IMR-90 (cell line): ENCODE measurements at regions of chrX and their contacts with region 1.

Region 1: GRCh38 chrX:153667956-153668396 is 5.6 kb downstream of the PNCK start:
- DNase-seq: peak; percentile 64
- ATAC-seq: peak; percentile 93
- H3K4me3 ChIP-seq: no peak overlapping the region
- H3K27ac ChIP-seq: no peak overlapping the region
- H3K4me1 ChIP-seq: no peaks in the 10 kb centered on the region
- H3K27me3 ChIP-seq: peaks cover 20% of the 10 kb centered on the region
- CTCF ChIP-seq: peak; percentile 73
- POLR2A ChIP-seq: no peak
- RAD21 ChIP-seq: peak; percentile 77

Region 2: DNA sequence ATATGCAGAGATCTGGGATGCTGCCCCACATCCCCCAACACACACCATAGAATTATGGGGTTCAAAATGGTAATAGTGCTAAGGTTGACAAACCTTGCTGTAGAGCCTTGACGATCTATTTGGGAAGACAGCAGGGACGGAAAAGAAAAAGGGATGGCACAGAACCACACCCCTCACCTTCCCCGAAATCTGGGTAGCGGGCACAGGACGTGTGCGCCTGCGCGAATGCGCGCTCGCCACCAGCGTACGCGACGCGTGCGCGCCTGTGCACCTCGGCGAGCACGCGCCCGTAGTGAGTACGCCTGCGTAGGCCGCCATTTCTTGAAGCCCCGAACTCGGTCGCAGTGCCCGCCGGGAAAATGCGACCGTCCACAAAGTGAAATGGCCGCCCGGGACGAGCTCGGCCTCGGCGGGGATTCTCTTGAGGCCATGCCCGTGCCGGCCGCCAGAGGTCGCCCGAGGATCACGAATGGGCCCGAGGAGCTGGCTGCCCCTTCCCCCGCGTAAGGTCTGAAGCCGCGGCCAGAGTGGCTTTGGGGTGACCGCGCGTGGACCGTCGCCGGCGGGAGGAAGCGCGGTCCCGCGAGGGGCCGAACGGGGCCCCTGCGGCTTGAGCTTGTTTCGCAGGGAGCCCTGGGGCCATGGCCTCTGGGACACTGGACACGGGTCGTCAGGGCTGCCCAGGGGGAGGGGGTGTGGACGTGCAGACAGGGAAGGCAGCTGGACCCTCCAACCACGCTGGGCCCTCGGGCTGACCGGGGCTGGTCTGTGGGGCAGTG is 726.5 kb before region 1 on chrX:
- CTCF ChIA-PET with region 1: no interaction called
- POLR2A ChIA-PET with region 1: no interaction called
- dilution Hi-C with region 1: no loop called
- in situ Hi-C with region 1: no loop called
- intact Hi-C with region 1: loop called (anchors 5 kb)
- DNase-seq: peak; percentile 89
- ATAC-seq: peak; percentile 96
- H3K4me3 ChIP-seq: peak overlapping the region; percentile 78
- H3K27ac ChIP-seq: peak overlapping the region; percentile 67
- H3K4me1 ChIP-seq: peaks cover 2% of the 10 kb centered on the region; the same call in 1 of the 2 replicates
- H3K27me3 ChIP-seq: peaks cover 6% of the 10 kb centered on the region; the same call in 1 of the 2 replicates
- CTCF ChIP-seq: peak; percentile 81
- POLR2A ChIP-seq: 0 out of 2 replicates have a peak, but pooled peaks have one; percentile 26
- RAD21 ChIP-seq: peak; percentile 81

Region 3: DNA sequence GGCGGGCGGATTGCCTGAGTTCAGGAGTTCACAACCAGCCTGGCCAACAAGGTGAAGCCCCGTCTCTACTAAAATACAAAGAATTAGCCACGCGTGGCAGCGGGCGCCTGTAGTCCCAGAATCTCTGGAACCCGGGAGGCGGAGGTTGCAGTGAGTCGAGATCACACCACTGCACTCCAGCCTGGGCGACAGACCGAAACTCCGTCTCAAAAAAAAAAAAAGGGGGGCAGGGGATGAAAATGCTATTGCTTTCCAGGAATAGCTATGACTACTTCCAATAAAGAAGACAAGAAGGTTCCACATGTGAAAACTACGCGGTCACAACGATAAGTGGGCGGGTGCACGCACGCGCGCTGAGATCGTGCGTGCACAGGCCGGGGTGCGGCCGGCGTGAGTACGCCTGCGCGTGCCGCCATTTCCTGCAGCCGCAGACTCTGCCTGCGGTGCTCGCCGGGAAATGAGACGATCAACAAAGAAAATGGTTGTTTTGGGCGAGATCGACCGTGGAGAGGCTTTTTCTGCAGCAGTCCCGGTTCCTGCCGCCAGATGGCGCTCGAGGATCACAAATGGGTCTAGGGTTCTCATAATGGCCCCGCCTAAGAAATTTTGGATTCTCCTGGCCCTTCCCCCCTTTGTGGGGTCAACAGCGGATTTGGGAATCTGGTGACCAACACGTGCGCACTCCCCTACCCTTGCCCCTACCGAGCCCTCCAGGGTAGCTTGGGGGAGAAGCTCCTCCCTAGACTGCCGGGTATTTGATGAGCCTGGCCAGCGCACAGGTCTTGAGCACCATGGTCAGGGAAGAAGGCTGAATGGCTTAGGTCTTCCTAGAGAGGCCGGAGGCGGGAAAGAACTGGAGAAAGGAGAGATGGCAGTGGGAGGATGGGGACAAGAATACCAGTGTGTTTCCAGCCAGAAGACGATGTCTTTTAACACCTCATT is 709.2 kb before region 1 on chrX:
- CTCF ChIA-PET with region 1: no interaction called
- POLR2A ChIA-PET with region 1: no interaction called
- dilution Hi-C with region 1: no loop called
- in situ Hi-C with region 1: loop called (anchors 25 kb)
- intact Hi-C with region 1: loop called (anchors 1 kb)
- DNase-seq: peak; percentile 85
- ATAC-seq: peak; percentile 99
- H3K4me3 ChIP-seq: peak overlapping the region; percentile 11
- H3K27ac ChIP-seq: no peak overlapping the region
- H3K4me1 ChIP-seq: no peaks in the 10 kb centered on the region
- H3K27me3 ChIP-seq: no peaks in the 10 kb centered on the region
- CTCF ChIP-seq: peak; percentile 88
- POLR2A ChIP-seq: no peak
- RAD21 ChIP-seq: peak; percentile 88

Region 4: GRCh38 chrX:153032397-153033118 is 635.4 kb before region 1 on chrX:
- CTCF ChIA-PET with region 1: no interaction called
- POLR2A ChIA-PET with region 1: no interaction called
- dilution Hi-C with region 1: no loop called
- in situ Hi-C with region 1: no loop called
- intact Hi-C with region 1: loop called (anchors 5 kb)
- DNase-seq: peak; percentile 18
- ATAC-seq: peak; percentile 93
- H3K4me3 ChIP-seq: no peak overlapping the region
- H3K27ac ChIP-seq: no peak overlapping the region
- H3K4me1 ChIP-seq: no peaks in the 10 kb centered on the region
- H3K27me3 ChIP-seq: no peaks in the 10 kb centered on the region; the same call in 1 of the 2 replicates
- CTCF ChIP-seq: peak; percentile 80
- POLR2A ChIP-seq: no peak
- RAD21 ChIP-seq: peak; percentile 90

Region 5: DNA sequence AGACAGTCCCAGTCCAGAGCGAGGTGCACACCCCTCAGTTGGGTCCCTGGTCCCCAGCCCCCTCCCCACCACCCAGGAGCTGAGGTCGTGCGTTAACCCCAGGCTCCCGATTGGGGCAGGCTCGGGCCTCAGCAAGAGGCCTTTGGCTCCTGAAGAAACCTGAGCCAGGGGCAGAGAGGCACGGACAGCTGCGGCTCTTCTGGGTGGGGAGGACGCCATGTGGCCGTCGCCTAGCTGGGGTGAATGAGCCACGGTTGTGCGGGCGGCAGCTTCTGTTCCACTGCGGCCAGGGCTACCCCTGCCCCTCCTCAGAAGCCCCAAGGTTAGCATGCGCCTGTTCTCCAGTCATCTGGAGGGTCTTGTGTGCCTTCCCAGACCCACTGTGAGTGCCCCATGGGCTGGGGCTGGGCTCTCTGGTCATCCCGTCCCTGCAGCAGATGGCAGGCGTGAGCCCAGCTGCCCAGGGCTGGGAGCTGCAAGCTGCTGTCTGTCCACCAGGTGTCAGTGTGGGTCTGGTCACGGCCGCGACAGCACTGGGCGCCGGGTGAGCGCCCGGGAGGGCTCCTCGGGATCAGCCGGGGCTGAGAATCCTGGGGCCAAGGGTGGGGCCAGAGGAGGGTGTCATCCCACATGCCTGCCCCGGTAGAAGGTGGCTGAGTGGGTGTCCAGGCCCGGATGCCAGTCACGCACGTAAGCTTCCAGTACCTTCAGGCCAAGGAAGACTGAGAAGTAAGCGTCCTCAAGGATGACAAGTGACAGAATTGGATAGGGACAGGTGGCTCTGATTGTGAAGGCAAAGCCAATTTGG is 128.6 kb before region 1 on chrX:
- CTCF ChIA-PET with region 1: interaction called, 5 read pairs
- POLR2A ChIA-PET with region 1: no interaction called
- dilution Hi-C with region 1: no loop called
- in situ Hi-C with region 1: no loop called
- intact Hi-C with region 1: loop called (anchors 1 kb)
- DNase-seq: peak; percentile 44
- ATAC-seq: peak; percentile 98
- H3K4me3 ChIP-seq: no peak overlapping the region
- H3K27ac ChIP-seq: no peak overlapping the region
- H3K4me1 ChIP-seq: no peaks in the 10 kb centered on the region
- H3K27me3 ChIP-seq: peaks cover 7% of the 10 kb centered on the region; the same call in 1 of the 2 replicates
- CTCF ChIP-seq: peak; percentile 96
- POLR2A ChIP-seq: no peak
- RAD21 ChIP-seq: peak; percentile 75

Region 6: DNA sequence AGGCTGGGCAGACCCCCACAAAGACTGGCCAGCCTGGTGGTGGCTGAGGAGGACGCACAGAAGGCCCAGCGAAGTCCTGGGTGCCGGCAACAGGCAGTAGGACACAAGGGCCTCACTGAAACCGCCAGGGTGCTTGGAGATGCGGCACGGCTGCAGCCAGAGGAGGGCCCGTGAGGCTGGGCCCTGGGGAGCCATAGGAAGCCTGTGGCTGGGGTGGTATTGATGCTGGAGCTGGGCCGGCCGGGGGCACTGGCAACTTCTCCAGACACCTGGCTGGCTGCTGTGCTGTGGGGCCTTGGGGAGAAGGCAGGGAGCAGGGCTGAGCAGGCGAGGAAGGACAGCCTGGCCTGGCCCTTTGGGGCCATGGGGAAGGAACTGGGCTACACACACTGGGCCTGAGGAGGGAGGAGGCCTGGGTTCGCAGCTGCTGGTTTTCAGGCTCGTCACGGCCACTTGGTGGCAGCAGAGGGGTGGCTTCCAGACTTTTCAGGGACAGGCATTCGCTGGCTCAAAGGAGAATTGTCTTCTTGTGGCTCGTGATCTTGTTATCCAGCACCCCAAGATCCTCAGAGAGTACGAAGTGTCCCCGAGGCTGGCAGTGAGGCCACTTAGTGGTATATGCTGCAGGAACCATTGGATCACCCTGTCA is 113.3 kb before region 1 on chrX:
- CTCF ChIA-PET with region 1: interaction called, 3 read pairs
- POLR2A ChIA-PET with region 1: no interaction called
- dilution Hi-C with region 1: no loop called
- in situ Hi-C with region 1: loop called (anchors 5 kb)
- intact Hi-C with region 1: loop called (anchors 1 kb)
- DNase-seq: peak; percentile 31
- ATAC-seq: peak; percentile 94
- H3K4me3 ChIP-seq: no peak overlapping the region
- H3K27ac ChIP-seq: no peak overlapping the region
- H3K4me1 ChIP-seq: no peaks in the 10 kb centered on the region
- H3K27me3 ChIP-seq: peaks cover 11% of the 10 kb centered on the region; the same call in 1 of the 2 replicates
- CTCF ChIP-seq: peak; percentile 65
- POLR2A ChIP-seq: no peak
- RAD21 ChIP-seq: peak; percentile 70

Region 7: GRCh38 chrX:153609917-153610428 is 58.0 kb before region 1 on chrX:
- CTCF ChIA-PET with region 1: interaction called, 16 read pairs
- POLR2A ChIA-PET with region 1: no interaction called
- dilution Hi-C with region 1: no loop called
- in situ Hi-C with region 1: no loop called
- intact Hi-C with region 1: loop called (anchors 1 kb)
- DNase-seq: peak; percentile 65
- ATAC-seq: peak; percentile 90
- H3K4me3 ChIP-seq: peak overlapping the region; percentile 24; the same call in 1 of the 2 replicates
- H3K27ac ChIP-seq: no peak overlapping the region
- H3K4me1 ChIP-seq: no peaks in the 10 kb centered on the region
- H3K27me3 ChIP-seq: peaks cover 16% of the 10 kb centered on the region
- CTCF ChIP-seq: peak; percentile 69
- POLR2A ChIP-seq: no peak
- RAD21 ChIP-seq: peak; percentile 59

Region 8: DNA sequence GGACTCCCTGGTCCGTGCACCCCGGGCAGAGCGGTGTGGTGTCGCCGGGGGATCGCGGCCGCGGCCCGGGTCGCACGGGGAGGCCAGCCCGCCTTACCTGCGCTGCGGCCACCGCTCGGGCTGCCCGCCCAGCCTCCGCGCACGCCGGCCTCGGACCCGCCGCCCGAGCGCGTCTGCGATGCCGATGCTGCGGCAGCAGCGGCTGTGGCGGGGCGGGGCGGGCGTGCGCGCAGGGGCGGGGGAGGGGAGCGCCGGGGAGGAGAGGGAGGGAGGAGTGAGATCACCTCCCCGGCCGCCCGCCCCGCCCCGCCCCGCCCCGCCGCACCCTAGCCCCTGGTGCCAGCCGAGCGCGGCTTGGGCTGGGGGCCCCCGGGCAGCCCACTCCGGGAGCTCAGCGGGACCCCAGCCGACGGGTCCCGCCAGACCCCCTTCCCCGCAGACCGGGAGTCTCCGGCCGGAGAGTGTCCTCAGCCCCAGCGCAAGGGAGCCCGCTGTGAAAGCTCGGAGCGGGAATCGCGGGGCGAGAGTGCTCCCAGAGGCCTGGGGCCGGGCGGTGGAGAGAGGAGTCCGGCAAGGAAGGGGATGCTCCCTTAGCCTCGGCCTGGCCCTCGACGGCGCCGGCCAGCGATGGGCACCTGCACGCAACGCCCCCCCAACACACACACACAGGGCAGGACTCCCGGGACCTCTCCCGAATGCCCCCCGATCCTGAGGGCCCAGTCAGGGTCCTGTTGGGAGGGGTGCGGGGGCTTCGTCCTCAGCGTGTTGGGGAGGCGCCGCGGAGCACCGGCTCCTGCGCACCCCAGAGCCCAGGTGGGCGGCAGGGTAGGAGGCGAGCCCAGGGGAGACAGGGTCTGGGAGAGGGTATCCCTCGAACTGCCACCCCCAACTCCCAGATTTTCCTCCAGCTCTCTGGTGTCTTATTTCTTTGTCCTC is 218.3 kb after region 1 on chrX and contains the start of gene L1CAM:
- CTCF ChIA-PET with region 1: no interaction called
- POLR2A ChIA-PET with region 1: no interaction called
- dilution Hi-C with region 1: no loop called
- in situ Hi-C with region 1: no loop called
- intact Hi-C with region 1: no loop called
- DNase-seq: no peak
- ATAC-seq: peak; percentile 53
- H3K4me3 ChIP-seq: no peak within 1 kb of the TSS
- H3K27ac ChIP-seq: no peak within 1 kb of the TSS
- H3K4me1 ChIP-seq: no peaks in the 10 kb centered on the region
- H3K27me3 ChIP-seq: peaks cover 62% of the 10 kb centered on the region
- CTCF ChIP-seq: no peak
- POLR2A ChIP-seq: no peak
- RAD21 ChIP-seq: no peak
- total RNA-seq, gene L1CAM: 0.36 and 0.56 TPM in 2 replicates